H1 (cell line): ENCODE measurements at regions of chr20 and their contacts with region 1.

Region 1: GRCh38 chr20:38304845-38305447 is 990 bp downstream of the BPI start:
- DNase-seq: peak; percentile 10 to 90
- H3K4me3 ChIP-seq: no peak overlapping the region
- H3K27ac ChIP-seq: no peak overlapping the region
- H3K4me1 ChIP-seq: peaks cover 0 to 4% (median 2%) of the 10 kb centered on the region in 4 experiments; a peak in 3 of 7 replicates
- H3K27me3 ChIP-seq: no peaks in the 10 kb centered on the region; a peak in 1 of 7 replicates
- CTCF ChIP-seq: peak; percentile 78 to 86 (median 82)
- EP300 ChIP-seq: no peak
- POLR2A ChIP-seq: no peak
- RAD21 ChIP-seq: peak; percentile 61 to 71

Region 2: GRCh38 chr20:38321959-38322598 is 17.1 kb after region 1 on chr20:
- CTCF ChIA-PET with region 1: interaction called, 47 read pairs
- POLR2A ChIA-PET with region 1: interaction called, 3 read pairs
- DNase-seq: no peak
- H3K4me3 ChIP-seq: no peak overlapping the region
- H3K27ac ChIP-seq: no peak overlapping the region
- H3K4me1 ChIP-seq: no peaks in the 10 kb centered on the region
- H3K27me3 ChIP-seq: no peaks in the 10 kb centered on the region
- CTCF ChIP-seq: peak; percentile 45 to 66 (median 59)
- EP300 ChIP-seq: no peak
- POLR2A ChIP-seq: no peak
- RAD21 ChIP-seq: peak; percentile 61 to 70

Region 3: DNA sequence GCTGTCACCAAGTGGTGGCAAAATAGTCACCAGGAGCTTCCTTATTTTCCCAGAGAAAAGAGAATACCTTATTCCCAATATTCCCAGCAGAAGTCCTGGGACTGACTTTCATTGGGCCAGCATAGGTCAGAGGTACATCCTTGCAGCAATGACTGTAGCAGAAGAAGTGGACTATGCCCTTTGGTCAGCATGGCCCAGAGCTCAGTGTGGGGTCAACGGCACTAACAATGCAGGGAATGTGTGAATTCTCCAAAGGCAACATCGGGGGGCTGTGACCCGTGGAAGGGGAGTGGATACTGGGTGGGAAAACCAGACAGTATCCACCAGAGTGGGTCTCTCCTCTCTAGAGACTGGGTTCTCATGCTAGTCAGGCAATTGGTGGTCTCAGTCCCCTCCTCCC is 25.7 kb after region 1 on chr20:
- CTCF ChIA-PET with region 1: interaction called, 18 read pairs
- POLR2A ChIA-PET with region 1: no interaction called
- DNase-seq: no peak
- H3K4me3 ChIP-seq: no peak overlapping the region
- H3K27ac ChIP-seq: no peak overlapping the region
- H3K4me1 ChIP-seq: no peaks in the 10 kb centered on the region
- H3K27me3 ChIP-seq: no peaks in the 10 kb centered on the region
- CTCF ChIP-seq: no peak
- EP300 ChIP-seq: no peak
- POLR2A ChIP-seq: no peak
- RAD21 ChIP-seq: no peak

Region 4: DNA sequence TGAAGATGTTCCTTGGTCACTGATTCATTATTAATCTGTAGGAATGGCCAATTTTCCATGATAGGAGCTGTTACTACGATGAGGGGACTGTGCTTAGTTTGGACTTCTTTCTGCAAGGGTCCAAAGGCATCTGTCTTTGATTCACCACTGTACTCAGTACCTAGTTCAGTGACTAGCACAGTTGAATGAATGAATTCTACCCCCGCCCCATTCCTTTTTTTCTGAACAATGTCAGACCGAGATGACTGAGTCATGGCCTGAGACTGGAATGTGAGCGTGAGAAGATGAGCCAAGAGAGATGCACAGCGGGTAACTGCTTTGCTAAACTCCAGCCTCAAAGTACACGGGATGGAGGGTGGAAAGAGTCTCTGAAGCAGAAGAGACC is 130.6 kb after region 1 on chr20:
- CTCF ChIA-PET with region 1: no interaction called
- POLR2A ChIA-PET with region 1: no interaction called
- DNase-seq: no peak
- H3K4me3 ChIP-seq: peak overlapping the region in 1 of 4 experiments; percentile 91; a peak in 2 of 8 replicates
- H3K27ac ChIP-seq: no peak overlapping the region
- H3K4me1 ChIP-seq: peaks cover 0 to 17% (median 7%) of the 10 kb centered on the region in 4 experiments; a peak in 6 of 7 replicates
- H3K27me3 ChIP-seq: no peaks in the 10 kb centered on the region
- CTCF ChIP-seq: no peak
- EP300 ChIP-seq: no peak
- POLR2A ChIP-seq: no peak
- RAD21 ChIP-seq: no peak